HEK293T (cell line): ENCODE measurements at regions of chr10 and their contacts with region 1.

Region 1: GRCh38 chr10:110007701-110008517 is at the start of gene ADD3:
- DNase-seq: peak; percentile 99

Region 2: GRCh38 chr10:109992485-109992884 is 15.4 kb before region 1 on chr10:
- CTCF ChIA-PET with region 1: no interaction called
- POLR2A ChIA-PET with region 1: interaction called, 13 read pairs
- DNase-seq: no peak